A549 (cell line): ENCODE measurements at regions of chr3 and their contacts with region 1.

Region 1: DNA sequence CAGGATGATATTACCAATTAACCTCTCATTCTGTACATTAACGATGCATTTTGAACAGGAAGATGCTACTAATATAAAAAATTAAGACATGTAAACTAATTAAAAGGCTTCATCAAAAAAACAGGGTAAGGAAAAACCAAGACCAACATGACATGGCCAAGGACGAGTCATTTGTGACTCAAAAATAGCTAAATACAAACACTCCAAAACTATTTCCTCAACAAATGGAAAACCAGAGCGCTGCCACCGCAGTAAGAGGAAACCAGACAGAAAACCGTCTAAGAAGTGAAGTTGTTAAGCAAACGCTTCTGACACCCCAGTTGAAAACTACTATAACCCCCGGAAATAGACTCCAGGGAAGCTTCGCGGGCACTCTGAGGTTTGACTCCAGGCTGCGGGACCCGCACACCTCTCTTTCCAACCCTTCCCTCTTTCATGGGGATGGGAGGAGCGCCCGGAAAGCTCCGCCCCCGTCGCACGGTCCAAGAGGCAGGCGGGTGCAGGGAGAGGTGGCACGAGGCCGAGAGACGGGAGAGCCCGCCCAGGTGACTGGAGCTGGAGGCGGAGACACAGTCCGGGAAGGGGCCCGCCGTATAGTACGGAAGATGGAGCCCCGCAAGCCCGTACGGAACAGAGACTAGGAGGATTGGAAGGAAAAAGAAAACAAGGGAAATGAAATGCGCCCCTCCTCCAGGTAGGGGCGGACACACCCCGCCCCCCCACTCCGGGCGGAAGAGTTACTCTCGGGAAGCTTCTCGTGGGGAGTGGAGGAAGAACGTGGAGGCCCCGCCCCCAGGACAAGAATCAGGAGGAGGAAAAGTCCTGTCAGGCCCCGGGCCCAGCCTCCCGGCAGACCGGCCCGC is 708 bp downstream of the DCAF1 start:
- DNase-seq: peak; percentile 69 to 94
- ATAC-seq: peak; percentile 86 to 88
- H3K4me3 ChIP-seq: peak overlapping the region; percentile 63
- H3K27ac ChIP-seq: peak overlapping the region; percentile 92 to 99
- H3K4me1 ChIP-seq: 0 out of 3 replicates have a peak, but pooled peaks cover 4% of the 10 kb centered on the region
- CTCF ChIP-seq: no peak
- EP300 ChIP-seq: no peak
- POLR2A ChIP-seq: no peak
- RAD21 ChIP-seq: no peak

Region 2: DNA sequence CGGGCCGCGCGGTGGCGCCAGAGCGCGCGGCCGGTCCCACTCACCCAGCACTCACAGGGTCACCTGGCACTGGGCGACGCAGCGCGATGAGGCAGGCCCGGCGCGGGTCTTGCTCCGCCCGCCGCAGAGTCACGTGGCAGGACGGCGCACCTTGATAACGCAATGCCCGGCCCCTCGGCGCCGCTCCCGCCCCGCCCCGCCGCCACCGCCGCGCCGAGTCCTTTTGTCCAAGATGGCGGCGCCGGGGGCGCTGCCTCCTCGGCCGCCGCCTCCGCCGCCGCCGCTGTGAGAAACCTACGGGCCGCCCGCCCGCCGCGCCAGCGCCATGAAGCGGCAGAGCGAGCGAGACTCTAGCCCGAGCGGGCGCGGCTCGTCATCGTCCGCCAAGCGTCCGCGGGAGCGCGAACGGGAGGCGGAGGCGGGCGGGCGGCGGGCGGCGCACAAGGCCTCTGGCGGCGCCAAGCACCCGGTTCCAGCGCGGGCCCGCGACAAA is 108.0 kb before region 1 on chr3 and contains the start of gene RBM15B:
- CTCF ChIA-PET with region 1: interaction called, 11 read pairs
- POLR2A ChIA-PET with region 1: interaction called, 4 read pairs
- DNase-seq: peak; percentile 82 to 95
- ATAC-seq: peak; percentile 88 to 93
- H3K4me3 ChIP-seq: peak within 1 kb of the TSS; percentile 92
- H3K27ac ChIP-seq: peak within 1 kb of the TSS; percentile 94 to 99
- H3K4me1 ChIP-seq: peaks cover 38% of the 10 kb centered on the region
- CTCF ChIP-seq: peak; percentile 75
- EP300 ChIP-seq: no peak
- POLR2A ChIP-seq: peak; percentile 61; the same call in 1 of the 2 replicates
- RAD21 ChIP-seq: peak; percentile 34 to 41; a peak in 2 of 5 replicates
- polyA plus RNA-seq, gene RBM15B: 7.9 and 10.9 TPM in 2 replicates

Region 3: GRCh38 chr3:51422211-51422610 is 76.9 kb before region 1 on chr3:
- CTCF ChIA-PET with region 1: no interaction called
- POLR2A ChIA-PET with region 1: no interaction called
- DNase-seq: no peak
- ATAC-seq: no peak
- H3K4me3 ChIP-seq: no peak overlapping the region
- H3K27ac ChIP-seq: no peak overlapping the region
- H3K4me1 ChIP-seq: no peaks in the 10 kb centered on the region
- CTCF ChIP-seq: no peak
- EP300 ChIP-seq: no peak
- POLR2A ChIP-seq: no peak
- RAD21 ChIP-seq: no peak

Region 4: GRCh38 chr3:51519848-51520247 is 20.7 kb after region 1 on chr3:
- CTCF ChIA-PET with region 1: interaction called, 18 read pairs
- POLR2A ChIA-PET with region 1: interaction called, 5 read pairs
- DNase-seq: no peak
- ATAC-seq: no peak
- H3K4me3 ChIP-seq: no peak overlapping the region
- H3K27ac ChIP-seq: no peak overlapping the region
- H3K4me1 ChIP-seq: no peaks in the 10 kb centered on the region
- CTCF ChIP-seq: no peak
- EP300 ChIP-seq: no peak
- POLR2A ChIP-seq: no peak
- RAD21 ChIP-seq: no peak

Region 5: DNA sequence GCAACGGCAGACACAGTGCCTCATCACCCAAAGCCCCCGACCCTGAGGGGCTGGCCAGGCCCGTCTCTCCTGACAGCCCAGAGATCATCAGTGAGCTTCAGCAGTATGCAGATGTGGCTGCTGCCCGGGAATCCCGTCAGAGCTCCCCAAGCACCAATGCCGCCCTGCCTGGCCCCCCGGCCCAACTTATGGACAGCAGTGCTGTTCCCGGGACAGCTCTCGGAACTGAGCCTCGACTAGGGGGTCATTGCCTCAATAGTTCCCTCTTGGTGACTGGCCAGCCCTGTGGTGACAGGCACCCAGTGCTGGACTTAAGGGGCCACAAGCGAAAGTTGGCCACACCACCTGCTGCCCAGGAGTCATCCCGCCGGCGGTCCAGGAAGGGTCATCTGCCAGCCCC is 163.3 kb after region 1 on chr3:
- CTCF ChIA-PET with region 1: interaction called, 10 read pairs
- POLR2A ChIA-PET with region 1: no interaction called
- DNase-seq: no peak
- ATAC-seq: no peak
- H3K4me3 ChIP-seq: no peak overlapping the region
- H3K27ac ChIP-seq: no peak overlapping the region
- H3K4me1 ChIP-seq: no peaks in the 10 kb centered on the region
- CTCF ChIP-seq: no peak
- EP300 ChIP-seq: no peak
- POLR2A ChIP-seq: no peak
- RAD21 ChIP-seq: no peak

Region 6: DNA sequence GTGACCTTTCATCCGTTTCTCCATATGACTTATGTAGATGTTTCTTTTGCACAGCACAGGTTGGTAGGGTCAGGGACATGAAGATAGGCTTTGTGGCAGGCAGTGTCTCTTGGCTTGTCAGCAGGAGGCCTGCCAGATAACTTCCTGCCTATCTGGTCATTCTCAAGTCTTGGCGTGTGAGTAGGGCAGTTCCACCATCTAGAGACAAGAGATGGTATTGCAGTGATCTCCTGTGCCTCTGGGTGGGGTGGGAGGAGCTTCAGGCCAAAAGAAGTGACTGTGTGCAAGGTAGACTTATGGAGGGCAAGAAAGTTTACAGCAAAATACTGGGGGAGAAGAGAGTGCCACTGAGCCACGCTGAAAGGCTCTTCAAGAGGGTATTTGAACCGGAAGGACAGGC is 183.0 kb after region 1 on chr3:
- CTCF ChIA-PET with region 1: interaction called, 115 read pairs
- POLR2A ChIA-PET with region 1: interaction called, 10 read pairs
- DNase-seq: peak; percentile 81 to 84
- ATAC-seq: peak; percentile 92 to 98
- H3K4me3 ChIP-seq: no peak overlapping the region
- H3K27ac ChIP-seq: no peak overlapping the region
- H3K4me1 ChIP-seq: peaks cover 4% of the 10 kb centered on the region; the same call in 1 of the 3 replicates
- CTCF ChIP-seq: peak; percentile 55
- EP300 ChIP-seq: no peak
- POLR2A ChIP-seq: no peak
- RAD21 ChIP-seq: peak; percentile 63 to 70